Psoas muscle (tissue), 8 donors: ENCODE measurements at regions of chr6 and their contacts with region 1.

Region 1: DNA sequence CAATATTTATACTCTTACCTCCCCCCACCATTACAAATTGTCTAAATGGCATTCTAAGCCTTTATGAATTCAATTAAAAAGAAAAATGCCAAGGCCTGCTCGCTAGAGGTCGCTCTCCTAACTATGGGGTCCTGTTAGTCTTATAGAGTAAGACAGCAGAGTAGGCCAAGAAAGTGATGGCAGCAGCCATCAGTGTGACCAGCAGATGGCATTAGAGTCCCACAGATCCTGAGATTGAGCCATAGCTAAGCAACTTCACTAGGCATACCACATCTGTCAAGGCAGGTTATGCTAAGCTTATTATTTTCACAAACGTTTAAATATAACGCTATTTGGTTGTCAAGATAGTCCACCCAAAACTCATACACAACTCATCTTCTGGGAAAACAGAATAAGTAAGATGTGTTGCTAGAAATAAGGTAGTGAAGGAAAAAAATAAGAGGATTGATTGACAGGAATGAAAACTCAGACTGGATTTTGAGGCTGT is 57.6 kb upstream of the SCAF8 start:
- DNase-seq: peak; percentile 78 to 84
- ATAC-seq: peak; percentile 98 to 100 (median 100)
- H3K4me3 ChIP-seq: no peak overlapping the region
- H3K27ac ChIP-seq: no peak overlapping the region
- H3K4me1 ChIP-seq: no peaks in the 10 kb centered on the region
- H3K27me3 ChIP-seq: no peaks in the 10 kb centered on the region
- CTCF ChIP-seq: peak; percentile 99

Region 2: GRCh38 chr6:154638369-154638768 is 37.3 kb before region 1 on chr6:
- intact Hi-C with region 1: no loop called
- DNase-seq: no peak
- ATAC-seq: no peak
- H3K4me3 ChIP-seq: no peak overlapping the region
- H3K27ac ChIP-seq: no peak overlapping the region
- H3K4me1 ChIP-seq: no peaks in the 10 kb centered on the region
- H3K27me3 ChIP-seq: no peaks in the 10 kb centered on the region
- CTCF ChIP-seq: no peak

Region 3: GRCh38 chr6:154649721-154650120 is 25.9 kb before region 1 on chr6:
- intact Hi-C with region 1: no loop called
- DNase-seq: no peak
- ATAC-seq: no peak
- H3K4me3 ChIP-seq: no peak overlapping the region
- H3K27ac ChIP-seq: no peak overlapping the region
- H3K4me1 ChIP-seq: no peaks in the 10 kb centered on the region
- H3K27me3 ChIP-seq: no peaks in the 10 kb centered on the region
- CTCF ChIP-seq: no peak

Region 4: DNA sequence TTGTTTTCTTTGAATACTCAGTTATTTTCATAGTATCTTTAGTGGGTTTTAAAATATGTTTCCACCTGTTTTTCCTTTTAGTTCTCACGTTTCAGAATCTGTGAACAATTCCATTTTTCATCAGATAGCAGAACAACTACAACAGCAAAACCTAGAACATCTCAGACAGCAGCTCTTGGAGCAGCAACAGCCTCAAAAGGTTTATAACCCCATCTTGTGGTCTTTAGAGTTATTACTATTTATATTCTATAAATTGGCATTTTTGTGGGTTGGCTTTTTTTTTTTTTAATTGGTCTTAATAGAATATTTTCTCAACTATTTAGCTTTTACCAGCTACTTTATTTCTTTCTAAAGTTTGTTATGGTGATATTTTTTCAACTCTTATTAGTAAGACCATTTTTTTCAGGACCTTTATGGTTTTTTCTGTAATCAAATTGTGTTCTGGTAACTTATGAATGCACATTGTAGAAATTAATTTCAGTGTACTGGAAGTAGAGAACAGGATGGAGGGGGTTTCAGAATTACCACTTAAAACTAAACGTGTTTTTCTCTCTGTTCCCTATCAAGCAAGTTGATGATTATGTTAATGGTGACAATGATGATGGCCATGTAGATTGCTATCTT is 129.8 kb after region 1 on chr6:
- intact Hi-C with region 1: loop called (anchors 1 to 5 kb)
- DNase-seq: no peak
- ATAC-seq: peak; percentile 48 to 87 (median 58)
- H3K4me3 ChIP-seq: no peak overlapping the region
- H3K27ac ChIP-seq: no peak overlapping the region
- H3K4me1 ChIP-seq: peaks cover 9% of the 10 kb centered on the region
- H3K27me3 ChIP-seq: no peaks in the 10 kb centered on the region
- CTCF ChIP-seq: peak; percentile 56